ENCODE measurements at regions of chr1 and their contacts with region 1.

Region 1: GRCh38 chr1:209692745-209693504 is 11.7 kb upstream of the HSD11B1 start:
- DNase-seq: peak; percentile 83

Region 2: DNA sequence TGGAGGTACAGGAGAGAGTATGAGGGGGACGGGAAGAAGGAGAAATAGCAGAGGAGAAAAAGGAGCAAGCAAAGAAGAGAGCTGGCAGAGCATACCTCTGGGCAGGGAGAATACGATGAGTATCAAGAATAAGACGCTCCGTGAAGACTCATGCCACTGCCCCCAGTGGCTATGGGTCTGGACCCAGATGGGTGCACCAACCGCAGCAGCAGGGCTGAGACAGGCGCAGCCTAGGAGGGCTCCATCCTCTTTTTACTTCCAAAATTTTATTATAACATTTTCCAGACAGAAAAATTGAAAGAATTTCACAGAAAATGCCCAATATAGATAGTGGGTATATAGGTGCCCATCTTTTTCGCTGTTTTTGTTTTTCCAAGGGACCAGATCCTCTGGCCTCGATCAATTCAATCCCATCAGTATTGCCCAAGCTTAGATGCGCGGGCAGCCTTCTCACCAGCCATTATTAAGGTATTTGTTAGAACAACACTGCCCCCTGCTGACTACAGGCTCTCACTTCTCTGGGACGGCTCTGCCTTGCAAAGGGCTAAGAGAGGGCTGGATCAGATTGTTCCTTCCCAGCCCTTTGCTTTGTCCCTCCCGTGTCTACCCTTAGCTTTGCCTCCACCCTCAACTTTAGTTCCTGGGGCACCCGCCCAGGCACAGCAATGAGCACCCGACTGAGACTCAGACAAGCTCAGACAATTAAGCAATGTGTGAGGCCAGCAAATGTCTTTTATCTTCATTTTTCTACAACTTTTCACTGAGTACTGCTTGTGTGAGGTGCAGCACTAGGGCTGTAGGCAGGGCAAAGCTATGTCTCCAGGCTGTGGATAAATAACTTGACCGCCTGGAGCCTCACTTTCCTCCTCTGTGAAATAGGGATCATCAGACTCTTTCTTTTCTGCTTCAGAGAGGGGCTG is 126.9 kb before region 1 on chr1:
- intact Hi-C with region 1: no loop called
- DNase-seq: peak; percentile 79

Region 3: GRCh38 chr1:209576798-209577197 is 116.1 kb before region 1 on chr1:
- intact Hi-C with region 1: loop called (anchors 2 kb)
- DNase-seq: peak; percentile 91

Region 4: GRCh38 chr1:209601809-209602657 is 90.9 kb before region 1 on chr1:
- intact Hi-C with region 1: loop called (anchors 2 kb)
- DNase-seq: no peak

Measured in cardiac septum (tissue), 1 donor.